Mammary epithelial cell (primary cell): ENCODE measurements at regions of chr5 and their contacts with region 1.

Region 1: DNA sequence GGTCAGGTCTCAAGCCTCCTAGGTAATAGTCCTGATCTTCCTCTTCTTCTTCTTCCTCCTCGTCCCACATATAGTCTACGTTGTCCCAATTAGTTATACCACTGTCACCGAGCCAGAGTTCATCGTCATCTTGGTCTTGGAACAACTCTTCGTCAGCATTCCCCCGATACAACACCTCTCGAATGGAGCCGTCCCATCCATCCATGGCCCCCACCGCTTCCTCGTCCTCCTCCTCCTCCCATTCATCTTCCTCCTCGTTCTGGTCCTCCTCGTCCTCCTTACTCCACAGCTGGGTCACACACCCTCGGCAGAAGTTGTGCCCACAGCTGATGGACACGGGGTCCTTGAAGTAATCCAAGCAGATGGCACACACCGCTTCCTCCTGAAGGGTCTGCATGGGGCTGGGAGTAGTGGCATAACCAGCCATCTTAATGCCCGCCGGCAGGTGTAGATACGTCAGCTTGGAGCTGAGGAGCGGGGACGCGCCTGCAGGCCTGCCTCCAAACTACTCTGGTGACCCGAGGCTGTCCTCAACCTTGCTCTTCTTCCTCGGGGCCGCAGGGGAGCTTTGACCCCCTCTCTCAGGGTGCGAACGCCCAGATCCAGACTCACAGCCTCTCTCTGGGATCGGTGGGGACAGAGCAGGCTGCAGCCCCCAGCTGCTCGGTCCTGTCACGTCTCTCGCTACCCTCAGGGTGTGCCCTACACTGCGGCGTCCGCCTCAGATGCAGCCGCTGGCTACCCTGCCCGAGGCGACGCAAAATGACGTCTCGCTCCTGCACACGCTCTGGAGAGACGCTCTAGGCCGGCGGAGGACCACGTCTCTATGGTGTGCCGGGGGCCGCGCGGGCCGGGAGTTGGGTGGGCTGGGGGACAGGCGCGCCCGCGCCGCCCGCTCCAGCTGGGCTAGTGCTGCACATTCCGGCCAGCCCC is at the start of gene TRIM52:
- DNase-seq: peak; percentile 84
- H3K4me3 ChIP-seq: peak within 1 kb of the TSS; percentile 58 to 78 (median 73)
- H3K27ac ChIP-seq: peak within 1 kb of the TSS; percentile 94
- H3K4me1 ChIP-seq: peaks cover 16% of the 10 kb centered on the region
- H3K27me3 ChIP-seq: no peaks in the 10 kb centered on the region
- CTCF ChIP-seq: no peak
- total RNA-seq, gene TRIM52: 5.7 to 6.0 TPM

Region 2: DNA sequence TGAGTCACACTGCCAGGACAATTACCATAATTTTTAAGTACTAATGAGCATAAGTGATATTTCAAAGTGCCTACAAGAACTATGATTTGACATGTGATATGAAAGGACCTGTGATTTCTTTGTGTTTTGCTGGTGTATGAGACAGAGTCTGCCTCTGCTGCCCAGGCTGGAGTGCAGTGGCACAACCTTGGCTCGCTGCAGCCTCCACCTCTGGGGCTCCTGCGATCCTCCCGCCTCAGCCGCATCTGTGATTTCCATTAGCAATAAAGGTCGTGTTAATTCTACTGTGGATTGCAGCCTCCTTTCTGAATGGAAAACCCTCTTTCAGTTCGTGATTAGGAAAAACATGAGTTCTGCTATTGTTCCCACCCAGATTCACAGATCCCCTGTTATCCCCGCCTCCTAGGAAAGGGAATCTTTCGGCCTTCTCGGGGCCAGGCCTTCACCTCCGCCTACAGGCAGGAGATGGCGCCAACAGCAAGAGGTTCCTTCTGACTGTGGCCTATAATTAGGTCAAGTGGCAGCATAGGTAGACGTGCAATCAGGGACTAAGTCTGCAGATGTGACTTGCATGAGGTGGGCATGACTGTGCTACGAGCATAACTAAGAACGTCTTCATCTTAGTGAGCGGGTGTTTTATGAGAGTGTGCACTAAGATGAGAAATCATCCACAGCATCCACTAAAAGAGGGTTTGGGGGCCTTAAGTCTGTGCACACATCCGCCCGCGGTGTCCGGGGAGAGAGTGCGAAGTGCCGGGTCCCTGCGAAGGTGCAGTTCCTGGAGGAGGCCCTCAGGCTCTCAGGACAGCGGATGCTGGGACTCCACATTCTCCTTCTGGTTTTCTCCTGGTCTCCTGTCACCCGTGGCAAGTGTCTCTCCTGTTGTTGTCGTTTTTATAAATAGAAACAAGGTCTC is 78.7 kb before region 1 on chr5:
- CTCF ChIA-PET with region 1: no interaction called
- dilution Hi-C with region 1: no loop called
- in situ Hi-C with region 1: no loop called
- intact Hi-C with region 1: loop called (anchors 1 kb)
- DNase-seq: peak; percentile 56
- H3K4me3 ChIP-seq: no peak overlapping the region
- H3K27ac ChIP-seq: no peak overlapping the region
- H3K4me1 ChIP-seq: peaks cover 3% of the 10 kb centered on the region
- H3K27me3 ChIP-seq: no peaks in the 10 kb centered on the region
- CTCF ChIP-seq: peak; percentile 82 to 83

Region 3: GRCh38 chr5:181204824-181205760 is 55.6 kb before region 1 on chr5 and contains the start of gene TRIM7:
- CTCF ChIA-PET with region 1: no interaction called
- dilution Hi-C with region 1: no loop called
- in situ Hi-C with region 1: no loop called
- intact Hi-C with region 1: no loop called
- DNase-seq: peak; percentile 74
- H3K4me3 ChIP-seq: peak within 1 kb of the TSS; percentile 64 to 73 (median 68)
- H3K27ac ChIP-seq: no peak within 1 kb of the TSS
- H3K4me1 ChIP-seq: peaks cover 22% of the 10 kb centered on the region
- H3K27me3 ChIP-seq: no peaks in the 10 kb centered on the region
- CTCF ChIP-seq: no peak
- total RNA-seq, gene TRIM7: 6.3 to 31.4 TPM

Region 4: DNA sequence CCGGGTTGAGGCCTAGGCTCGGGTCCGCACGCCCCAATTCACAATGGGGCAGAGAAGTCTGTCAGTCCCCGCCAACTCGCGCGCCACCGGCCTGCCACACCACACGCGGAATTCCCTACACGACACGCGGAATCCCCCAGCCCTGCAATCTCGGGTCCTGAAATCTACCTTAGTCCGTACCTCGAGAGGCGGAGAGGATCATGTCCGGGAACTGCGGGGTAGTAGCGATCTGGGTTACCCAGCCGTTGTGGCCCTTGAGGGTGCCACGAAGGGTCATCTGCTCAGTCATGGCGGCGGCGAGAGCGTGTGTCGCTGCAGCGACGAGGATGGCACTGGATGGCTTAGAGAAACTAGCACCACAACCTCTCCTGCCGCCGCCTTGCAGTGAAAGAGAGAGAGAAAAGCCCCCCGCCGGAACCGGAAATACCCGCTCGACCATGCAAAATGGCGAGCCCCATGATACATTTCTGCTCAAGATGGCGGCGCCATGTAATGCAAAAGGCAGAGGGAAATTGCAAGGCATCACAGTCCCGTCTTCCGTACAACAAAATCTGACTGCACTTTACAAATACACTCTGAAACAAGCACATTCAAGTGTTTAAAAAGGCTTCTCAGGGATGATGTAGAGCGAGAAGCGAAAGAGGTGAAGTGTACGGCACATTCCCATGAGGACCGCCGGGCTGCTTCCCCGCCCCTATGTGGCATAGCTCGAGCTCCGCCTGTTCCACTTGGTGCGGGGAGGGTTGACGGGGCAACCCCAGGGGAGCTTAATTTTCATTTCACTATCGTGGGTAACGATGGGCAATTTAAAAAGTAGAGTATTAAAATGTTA is 16.9 kb before region 1 on chr5 and contains the start of gene RACK1:
- CTCF ChIA-PET with region 1: interaction called, 3 read pairs
- dilution Hi-C with region 1: no loop called
- in situ Hi-C with region 1: no loop called
- intact Hi-C with region 1: loop called (anchors 1 kb)
- DNase-seq: peak; percentile 86
- H3K4me3 ChIP-seq: peak within 1 kb of the TSS; percentile 96 to 100 (median 98)
- H3K27ac ChIP-seq: peak within 1 kb of the TSS; percentile 84
- H3K4me1 ChIP-seq: peaks cover 35% of the 10 kb centered on the region
- H3K27me3 ChIP-seq: no peaks in the 10 kb centered on the region
- CTCF ChIP-seq: no peak
- total RNA-seq, gene RACK1: 2,031 to 4,986 TPM